CD4-positive, alpha-beta memory T cell (primary cell): ENCODE measurements at regions of chr18 and their contacts with region 1.

Region 1: GRCh38 chr18:3447895-3448837 is 1.8 kb upstream of the TGIF1 start:
- DNase-seq: peak; percentile 84 to 91 (median 89)
- H3K4me3 ChIP-seq: peak overlapping the region; percentile 74 to 84
- H3K4me3 Mint-ChIP-seq: peak overlapping the region; percentile 93 to 98 (median 96)
- H3K27ac ChIP-seq: peak overlapping the region; percentile 94
- H3K27ac Mint-ChIP-seq: peak overlapping the region; percentile 99 to 100 (median 100)
- H3K4me1 ChIP-seq: peaks cover 21% of the 10 kb centered on the region
- H3K4me1 Mint-ChIP-seq: peaks cover 9 to 53% (median 22%) of the 10 kb centered on the region in 4 donors
- H3K27me3 ChIP-seq: no peaks in the 10 kb centered on the region
- H3K27me3 Mint-ChIP-seq: peaks cover 0 to 6% of the 10 kb centered on the region in 2 donors

Region 2: GRCh38 chr18:2958819-2959298 is 489.3 kb before region 1 on chr18:
- CTCF ChIA-PET with region 1: no interaction called
- POLR2A ChIA-PET with region 1: interaction called, 7 read pairs
- intact Hi-C with region 1: loop called (anchors 2 kb)
- DNase-seq: peak in 2 of 5 donors; percentile 37 to 64
- H3K4me3 ChIP-seq: peak overlapping the region in 1 of 2 donors; percentile 9
- H3K4me3 Mint-ChIP-seq: peak overlapping the region; percentile 4 to 89 (median 73)
- H3K27ac ChIP-seq: peak overlapping the region; percentile 79
- H3K27ac Mint-ChIP-seq: peak overlapping the region; percentile 88 to 99 (median 98)
- H3K4me1 ChIP-seq: peaks cover 95% of the 10 kb centered on the region
- H3K4me1 Mint-ChIP-seq: peaks cover 68 to 97% (median 85%) of the 10 kb centered on the region in 4 donors
- H3K27me3 ChIP-seq: no peaks in the 10 kb centered on the region
- H3K27me3 Mint-ChIP-seq: no peaks in the 10 kb centered on the region

Region 3: DNA sequence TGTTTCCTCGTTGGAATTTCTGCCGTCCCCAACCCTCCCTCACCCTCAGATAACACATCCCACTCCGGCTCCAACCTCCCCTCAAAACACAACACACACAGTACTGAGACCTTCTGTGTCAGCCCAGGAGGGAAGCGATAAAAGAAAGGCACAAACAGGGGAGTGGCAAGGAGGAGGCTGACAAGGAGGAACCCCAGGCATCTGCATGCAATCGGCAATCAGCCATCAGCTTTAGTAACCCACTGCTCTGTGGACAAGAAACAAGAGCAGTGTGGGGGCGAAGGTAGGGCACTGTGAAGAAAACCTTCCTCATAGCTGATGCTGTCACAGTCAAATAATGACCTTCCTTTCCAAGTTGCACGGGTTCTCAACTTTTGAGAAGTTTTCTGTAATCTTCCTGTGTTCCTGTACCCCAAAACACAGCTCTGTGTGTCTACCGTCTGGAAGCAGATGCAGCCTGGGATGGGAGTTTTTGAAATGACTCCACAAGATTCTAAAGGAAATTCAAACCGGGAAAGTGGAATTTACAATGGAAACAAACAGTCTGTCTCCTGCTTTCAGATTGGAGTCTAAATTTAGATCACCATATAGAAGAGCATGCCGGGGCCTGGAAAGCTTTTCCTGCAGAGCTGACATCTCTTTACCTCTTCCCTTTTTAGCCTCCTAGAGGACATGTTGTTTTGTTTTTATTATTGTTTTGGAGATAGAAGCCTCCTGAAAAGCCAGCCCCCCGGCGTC is 418.8 kb before region 1 on chr18:
- CTCF ChIA-PET with region 1: no interaction called
- POLR2A ChIA-PET with region 1: no interaction called
- intact Hi-C with region 1: no loop called
- DNase-seq: no peak
- H3K4me3 ChIP-seq: no peak overlapping the region
- H3K4me3 Mint-ChIP-seq: no peak overlapping the region
- H3K27ac ChIP-seq: no peak overlapping the region
- H3K27ac Mint-ChIP-seq: no peak overlapping the region
- H3K4me1 ChIP-seq: no peaks in the 10 kb centered on the region
- H3K4me1 Mint-ChIP-seq: peaks cover 0 to 3% (median 0%) of the 10 kb centered on the region in 4 donors
- H3K27me3 ChIP-seq: no peaks in the 10 kb centered on the region
- H3K27me3 Mint-ChIP-seq: no peaks in the 10 kb centered on the region

Region 4: DNA sequence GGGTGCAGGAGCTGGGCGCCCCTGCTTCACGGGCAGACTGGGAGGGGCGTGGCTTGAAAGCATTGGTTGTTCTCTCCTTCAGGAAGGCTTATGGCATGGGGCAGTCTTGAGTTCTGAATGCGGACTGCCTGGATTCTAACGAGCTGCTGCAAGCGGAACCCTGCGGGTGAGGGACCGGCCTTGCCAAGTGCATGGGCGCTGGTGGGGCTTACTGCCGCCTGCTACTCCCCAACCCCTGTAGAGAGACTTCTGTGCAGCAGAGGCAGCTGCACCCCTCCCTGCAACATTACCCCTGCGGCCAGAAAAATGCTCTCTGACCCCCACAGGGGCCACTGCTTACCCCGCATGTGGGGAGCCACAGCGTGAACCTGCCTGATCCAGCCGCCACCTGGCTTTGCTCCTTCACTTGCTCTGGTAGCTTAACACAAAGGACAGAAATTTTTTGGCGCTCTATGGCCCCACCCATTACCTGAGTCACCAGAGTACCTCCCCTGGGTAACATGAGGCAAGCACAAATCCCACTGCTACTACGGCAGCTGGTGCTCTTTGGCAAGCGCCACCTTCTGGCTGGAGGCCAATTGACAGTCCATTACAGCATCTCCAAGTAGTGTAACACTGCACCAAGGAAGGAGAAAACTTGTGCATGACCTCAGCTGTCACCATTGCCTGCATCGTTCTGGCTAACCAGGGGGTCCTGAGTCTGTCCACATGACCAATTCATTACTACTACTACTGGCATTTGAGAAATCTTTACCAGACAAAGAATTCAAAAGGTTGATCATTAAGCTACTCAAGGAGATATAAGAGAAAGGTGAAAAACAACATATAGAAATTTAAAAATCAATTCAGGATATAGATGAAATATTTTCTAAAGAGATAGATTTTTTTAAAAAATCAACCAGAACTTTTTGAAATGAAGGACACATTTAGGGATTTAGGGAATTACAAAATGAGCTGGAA is 150.9 kb before region 1 on chr18:
- CTCF ChIA-PET with region 1: interaction called, 45 read pairs
- POLR2A ChIA-PET with region 1: interaction called, 25 read pairs
- intact Hi-C with region 1: no loop called
- DNase-seq: peak; percentile 88 to 95 (median 90)
- H3K4me3 ChIP-seq: peak overlapping the region; percentile 71 to 86
- H3K4me3 Mint-ChIP-seq: peak overlapping the region; percentile 91 to 98 (median 94)
- H3K27ac ChIP-seq: peak overlapping the region; percentile 44
- H3K27ac Mint-ChIP-seq: peak overlapping the region; percentile 51 to 96 (median 90)
- H3K4me1 ChIP-seq: peaks cover 9% of the 10 kb centered on the region
- H3K4me1 Mint-ChIP-seq: peaks cover 2 to 15% (median 10%) of the 10 kb centered on the region in 4 donors
- H3K27me3 ChIP-seq: no peaks in the 10 kb centered on the region
- H3K27me3 Mint-ChIP-seq: peaks cover 8 to 13% of the 10 kb centered on the region in 2 donors

Region 5: GRCh38 chr18:3525870-3526420 is 77.8 kb after region 1 on chr18:
- CTCF ChIA-PET with region 1: interaction called, 10 read pairs
- POLR2A ChIA-PET with region 1: interaction called, 9 read pairs
- intact Hi-C with region 1: loop called (anchors 5 kb)
- DNase-seq: peak; percentile 67 to 75 (median 71)
- H3K4me3 ChIP-seq: peak overlapping the region in 1 of 2 donors; percentile 47
- H3K4me3 Mint-ChIP-seq: peak overlapping the region; percentile 72 to 89 (median 82)
- H3K27ac ChIP-seq: no peak overlapping the region
- H3K27ac Mint-ChIP-seq: peak overlapping the region; percentile 25 to 86 (median 77)
- H3K4me1 ChIP-seq: peaks cover 16% of the 10 kb centered on the region
- H3K4me1 Mint-ChIP-seq: peaks cover 12 to 20% (median 15%) of the 10 kb centered on the region in 4 donors
- H3K27me3 ChIP-seq: no peaks in the 10 kb centered on the region
- H3K27me3 Mint-ChIP-seq: no peaks in the 10 kb centered on the region

Region 6: GRCh38 chr18:3604498-3605408 is 156.6 kb after region 1 on chr18:
- CTCF ChIA-PET with region 1: interaction called, 16 read pairs
- POLR2A ChIA-PET with region 1: interaction called, 32 read pairs
- intact Hi-C with region 1: no loop called
- DNase-seq: peak; percentile 43 to 63 (median 56)
- H3K4me3 ChIP-seq: peak overlapping the region; percentile 44 to 54
- H3K4me3 Mint-ChIP-seq: no peak overlapping the region
- H3K27ac ChIP-seq: peak overlapping the region; percentile 67
- H3K27ac Mint-ChIP-seq: no peak overlapping the region
- H3K4me1 ChIP-seq: peaks cover 58% of the 10 kb centered on the region
- H3K4me1 Mint-ChIP-seq: peaks cover 8 to 15% (median 11%) of the 10 kb centered on the region in 4 donors
- H3K27me3 ChIP-seq: no peaks in the 10 kb centered on the region
- H3K27me3 Mint-ChIP-seq: no peaks in the 10 kb centered on the region